B cell (primary cell): ENCODE measurements at regions of chr7 and their contacts with region 1.

Region 1: GRCh38 chr7:50092579-50093491 is at the start of gene ZPBP:
- DNase-seq: peak; percentile 83
- ATAC-seq: peak; percentile 80
- H3K4me3 ChIP-seq: peak within 1 kb of the TSS; percentile 46 to 82 (median 62)
- H3K4me3 Mint-ChIP-seq: peak within 1 kb of the TSS; percentile 94
- H3K27ac ChIP-seq: peak within 1 kb of the TSS; percentile 35 to 43
- H3K27ac Mint-ChIP-seq: peak within 1 kb of the TSS; percentile 72
- H3K4me1 ChIP-seq: peaks cover 4 to 5% of the 10 kb centered on the region in 2 donors
- H3K4me1 Mint-ChIP-seq: peaks cover 5% of the 10 kb centered on the region
- H3K27me3 ChIP-seq: no peaks in the 10 kb centered on the region
- H3K27me3 Mint-ChIP-seq: no peaks in the 10 kb centered on the region
- CTCF ChIP-seq: peak; percentile 97
- total RNA-seq, gene ZPBP: not detected in 2 replicates

Region 2: GRCh38 chr7:50119815-50120637 is 27.2 kb after region 1 on chr7:
- CTCF ChIA-PET with region 1: interaction called, 12 read pairs
- POLR2A ChIA-PET with region 1: no interaction called
- intact Hi-C with region 1: no loop called
- DNase-seq: peak; percentile 57
- ATAC-seq: peak; percentile 83
- H3K4me3 ChIP-seq: no peak overlapping the region
- H3K4me3 Mint-ChIP-seq: peak overlapping the region; percentile 26
- H3K27ac ChIP-seq: peak overlapping the region in 1 of 2 donors; percentile 60
- H3K27ac Mint-ChIP-seq: no peak overlapping the region
- H3K4me1 ChIP-seq: peaks cover 20 to 21% of the 10 kb centered on the region in 2 donors
- H3K4me1 Mint-ChIP-seq: peaks cover 22% of the 10 kb centered on the region
- H3K27me3 ChIP-seq: no peaks in the 10 kb centered on the region
- H3K27me3 Mint-ChIP-seq: no peaks in the 10 kb centered on the region
- CTCF ChIP-seq: peak; percentile 69

Region 3: DNA sequence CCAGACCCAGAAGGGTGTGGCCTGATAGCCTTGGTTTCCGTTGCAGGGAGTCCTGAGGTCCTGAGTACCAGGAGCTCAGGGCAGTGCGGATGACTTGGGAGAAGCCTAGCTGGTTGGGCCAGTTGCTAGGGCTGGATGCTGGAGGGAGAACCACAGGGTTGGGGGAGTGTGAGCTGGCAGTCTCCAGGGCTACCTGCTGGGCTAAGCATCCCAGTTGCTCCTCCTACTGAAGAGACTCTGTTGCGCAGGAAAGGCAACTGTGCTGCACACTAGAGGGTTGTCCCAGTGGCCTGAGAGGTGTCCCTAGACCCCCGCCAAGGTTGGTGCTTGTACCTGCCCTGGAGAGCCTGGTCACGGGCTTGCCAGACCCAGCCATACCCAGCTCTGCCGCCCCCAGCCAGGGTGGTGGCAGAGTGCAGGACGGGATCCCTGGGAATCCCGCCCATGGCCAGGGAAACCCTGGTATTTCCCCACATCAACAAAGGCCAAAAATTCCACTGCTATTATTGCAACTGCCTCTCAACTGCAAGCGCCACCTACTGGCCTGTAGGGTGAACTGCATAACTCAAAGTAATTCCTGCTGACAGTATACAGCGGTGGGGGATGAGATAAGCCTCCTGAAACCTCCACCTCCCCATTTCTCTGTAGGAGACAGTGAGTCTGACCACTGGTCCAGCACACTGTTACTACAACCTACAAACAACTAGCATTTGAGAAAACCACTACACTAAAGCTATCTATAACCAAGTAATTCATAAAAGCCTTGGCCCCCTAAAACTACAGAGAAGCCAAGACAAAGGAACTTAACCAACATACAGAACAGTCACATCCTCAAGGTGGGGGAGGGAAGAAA is 540.0 kb after region 1 on chr7:
- CTCF ChIA-PET with region 1: interaction called, 36 read pairs
- POLR2A ChIA-PET with region 1: no interaction called
- intact Hi-C with region 1: no loop called
- DNase-seq: peak; percentile 69
- ATAC-seq: peak; percentile 73
- H3K4me3 ChIP-seq: no peak overlapping the region
- H3K4me3 Mint-ChIP-seq: no peak overlapping the region
- H3K27ac ChIP-seq: no peak overlapping the region
- H3K27ac Mint-ChIP-seq: no peak overlapping the region
- H3K4me1 ChIP-seq: peaks cover 0 to 6% of the 10 kb centered on the region in 2 donors
- H3K4me1 Mint-ChIP-seq: peaks cover 12% of the 10 kb centered on the region
- H3K27me3 ChIP-seq: peaks cover 0 to 9% (median 3%) of the 10 kb centered on the region in 4 experiments
- H3K27me3 Mint-ChIP-seq: peaks cover 36% of the 10 kb centered on the region
- CTCF ChIP-seq: peak; percentile 96

Region 4: DNA sequence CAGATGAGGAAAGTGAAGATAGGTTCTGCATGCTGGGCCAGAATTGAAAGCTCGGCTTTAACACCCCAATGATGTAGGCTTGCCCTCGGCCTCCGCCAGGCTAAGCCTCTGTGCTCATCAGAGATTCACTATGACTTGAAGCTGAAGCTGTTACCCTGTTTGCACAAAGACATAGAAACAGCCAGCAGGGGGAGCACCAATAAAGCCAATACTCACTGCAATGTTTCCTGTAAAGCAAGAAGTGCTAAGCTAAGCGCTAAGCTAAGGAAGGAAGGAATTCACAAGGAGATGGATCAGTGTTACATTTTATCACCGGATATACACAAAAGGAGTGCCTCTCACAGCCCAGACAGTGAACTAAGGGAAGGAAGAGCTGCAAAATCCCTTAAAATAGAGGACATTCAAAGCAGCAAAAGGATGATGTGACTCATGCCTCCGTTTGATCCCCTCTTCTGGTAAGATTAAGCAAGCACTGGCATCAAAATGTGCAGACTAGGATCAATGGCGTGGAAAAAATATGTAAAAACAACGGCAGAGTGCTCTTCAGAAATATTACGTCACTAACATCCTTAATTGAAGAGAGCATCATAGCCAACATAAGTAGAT is 1070.0 kb after region 1 on chr7:
- CTCF ChIA-PET with region 1: interaction called, 142 read pairs
- POLR2A ChIA-PET with region 1: no interaction called
- intact Hi-C with region 1: no loop called
- DNase-seq: peak; percentile 63
- ATAC-seq: no peak
- H3K4me3 ChIP-seq: no peak overlapping the region
- H3K4me3 Mint-ChIP-seq: no peak overlapping the region
- H3K27ac ChIP-seq: no peak overlapping the region
- H3K27ac Mint-ChIP-seq: no peak overlapping the region
- H3K4me1 ChIP-seq: peaks cover 0 to 8% of the 10 kb centered on the region in 2 donors
- H3K4me1 Mint-ChIP-seq: peaks cover 2% of the 10 kb centered on the region
- H3K27me3 ChIP-seq: peaks cover 0 to 4% (median 2%) of the 10 kb centered on the region in 4 experiments
- H3K27me3 Mint-ChIP-seq: peaks cover 10% of the 10 kb centered on the region
- CTCF ChIP-seq: peak; percentile 83